Naive thymus-derived CD4-positive, alpha-beta T cell (primary cell): ENCODE measurements at regions of chr11 and their contacts with region 1.

Region 1: GRCh38 chr11:72483412-72484186 is 49.3 kb upstream of the CLPB start:
- DNase-seq: peak in 1 of 9 donors; percentile 12
- ATAC-seq: peak; percentile 64
- H3K4me3 ChIP-seq: no peak overlapping the region
- H3K4me3 Mint-ChIP-seq: peak overlapping the region in 2 of 10 donors; percentile 23 to 59
- H3K27ac ChIP-seq: no peak overlapping the region
- H3K27ac Mint-ChIP-seq: peak overlapping the region in 3 of 9 donors; percentile 21 to 71 (median 26)
- H3K4me1 ChIP-seq: peaks cover 0 to 4% of the 10 kb centered on the region in 2 donors
- H3K4me1 Mint-ChIP-seq: peaks cover 0 to 14% (median 7%) of the 10 kb centered on the region in 7 donors
- H3K27me3 ChIP-seq: no peaks in the 10 kb centered on the region
- H3K27me3 Mint-ChIP-seq: peaks cover 0 to 12% (median 9%) of the 10 kb centered on the region in 5 donors

Region 2: GRCh38 chr11:72418834-72419562 is 64.6 kb before region 1 on chr11:
- CTCF ChIA-PET with region 1: no interaction called
- POLR2A ChIA-PET with region 1: no interaction called
- intact Hi-C with region 1: no loop called
- DNase-seq: no peak
- ATAC-seq: no peak
- H3K4me3 ChIP-seq: no peak overlapping the region
- H3K4me3 Mint-ChIP-seq: peak overlapping the region in 2 of 10 donors; percentile 10 to 26
- H3K27ac ChIP-seq: no peak overlapping the region
- H3K27ac Mint-ChIP-seq: peak overlapping the region; percentile 37 to 78 (median 62)
- H3K4me1 ChIP-seq: peaks cover 0 to 12% of the 10 kb centered on the region in 2 donors
- H3K4me1 Mint-ChIP-seq: peaks cover 20 to 49% (median 43%) of the 10 kb centered on the region in 7 donors
- H3K27me3 ChIP-seq: no peaks in the 10 kb centered on the region
- H3K27me3 Mint-ChIP-seq: no peaks in the 10 kb centered on the region

Region 3: GRCh38 chr11:72519220-72519881 is 35.8 kb after region 1 on chr11:
- CTCF ChIA-PET with region 1: interaction called, 3 read pairs
- POLR2A ChIA-PET with region 1: no interaction called
- intact Hi-C with region 1: loop called in 1 of 2 experiments (anchors 1 kb)
- DNase-seq: peak in 6 of 9 donors; percentile 10 to 35 (median 24)
- ATAC-seq: peak; percentile 50
- H3K4me3 ChIP-seq: peak overlapping the region; percentile 33
- H3K4me3 Mint-ChIP-seq: peak overlapping the region; percentile 69 to 90 (median 86)
- H3K27ac ChIP-seq: peak overlapping the region; percentile 61
- H3K27ac Mint-ChIP-seq: peak overlapping the region; percentile 85 to 96 (median 90)
- H3K4me1 ChIP-seq: peaks cover 11 to 30% of the 10 kb centered on the region in 2 donors
- H3K4me1 Mint-ChIP-seq: peaks cover 13 to 34% (median 24%) of the 10 kb centered on the region in 7 donors
- H3K27me3 ChIP-seq: no peaks in the 10 kb centered on the region
- H3K27me3 Mint-ChIP-seq: peaks cover 0 to 36% (median 0%) of the 10 kb centered on the region in 5 donors

Region 4: DNA sequence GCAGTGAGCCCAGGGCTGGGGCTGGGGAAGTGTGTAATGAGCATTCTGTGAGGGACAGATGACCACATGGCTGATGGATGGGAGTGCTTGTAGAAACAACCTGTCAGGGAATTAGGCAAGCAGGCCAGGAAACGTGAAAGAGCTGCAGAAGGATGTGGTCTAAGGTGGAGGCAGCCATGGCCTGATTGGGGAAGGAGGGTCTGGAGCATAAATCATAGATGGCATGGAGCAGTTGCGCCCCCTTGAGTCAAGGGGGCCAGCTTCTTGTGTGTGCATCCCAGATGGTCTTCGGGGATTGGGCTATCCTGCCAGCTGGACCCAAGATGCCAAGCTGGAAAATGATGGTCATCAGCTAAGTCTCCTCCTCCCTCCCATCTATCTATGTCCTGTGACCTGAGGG is 70.1 kb after region 1 on chr11:
- CTCF ChIA-PET with region 1: interaction called, 4 read pairs
- POLR2A ChIA-PET with region 1: no interaction called
- intact Hi-C with region 1: loop called in 1 of 2 experiments (anchors 1 kb)
- DNase-seq: peak in 3 of 9 donors; percentile 1 to 8 (median 6)
- ATAC-seq: no peak
- H3K4me3 ChIP-seq: no peak overlapping the region
- H3K4me3 Mint-ChIP-seq: peak overlapping the region in 1 of 10 donors; percentile 23
- H3K27ac ChIP-seq: no peak overlapping the region
- H3K27ac Mint-ChIP-seq: no peak overlapping the region
- H3K4me1 ChIP-seq: no peaks in the 10 kb centered on the region
- H3K4me1 Mint-ChIP-seq: peaks cover 0 to 9% (median 5%) of the 10 kb centered on the region in 7 donors
- H3K27me3 ChIP-seq: no peaks in the 10 kb centered on the region
- H3K27me3 Mint-ChIP-seq: peaks cover 3 to 34% (median 10%) of the 10 kb centered on the region in 5 donors

Region 5: DNA sequence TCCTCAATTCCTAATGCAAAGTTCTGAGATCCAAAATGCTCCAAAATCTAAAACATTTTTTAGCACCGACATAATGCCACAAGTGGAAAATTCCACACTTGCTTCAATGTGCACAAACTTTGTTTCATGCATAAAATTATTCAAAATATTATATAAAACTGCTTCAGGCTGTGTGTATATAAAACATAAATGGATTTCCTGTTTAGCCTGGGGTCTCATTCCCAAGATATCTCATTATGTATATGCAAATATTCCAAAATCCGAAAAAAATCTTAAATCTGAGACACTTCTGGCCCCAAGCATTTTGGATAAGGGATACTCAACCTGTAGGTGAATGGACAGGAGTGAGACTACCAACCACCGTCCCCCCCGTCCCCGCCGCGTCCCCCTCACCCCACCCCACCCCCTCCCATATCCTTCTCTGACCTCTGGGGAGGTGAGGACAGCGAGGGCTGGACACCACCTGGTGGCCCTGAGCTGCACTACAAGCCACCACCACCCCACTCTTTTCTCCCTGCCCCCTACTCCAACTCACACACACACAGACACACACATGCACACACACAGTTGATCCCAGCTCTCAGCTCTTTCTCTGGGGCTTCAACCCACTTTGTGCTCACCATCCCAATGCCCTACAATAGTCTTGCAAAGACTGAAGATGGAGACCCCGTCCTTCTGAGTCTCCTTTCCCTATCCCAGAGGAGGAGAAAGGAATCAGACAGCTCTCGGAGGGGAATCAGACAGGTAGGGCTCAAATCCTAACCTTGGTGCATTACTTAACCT is 89.7 kb after region 1 on chr11:
- CTCF ChIA-PET with region 1: interaction called, 3 read pairs
- POLR2A ChIA-PET with region 1: interaction called, 4 read pairs
- intact Hi-C with region 1: loop called (anchors 1 kb)
- DNase-seq: peak in 3 of 9 donors; percentile 7 to 29 (median 16)
- ATAC-seq: peak; percentile 73
- H3K4me3 ChIP-seq: no peak overlapping the region
- H3K4me3 Mint-ChIP-seq: peak overlapping the region in 1 of 10 donors; percentile 8
- H3K27ac ChIP-seq: no peak overlapping the region
- H3K27ac Mint-ChIP-seq: peak overlapping the region in 1 of 9 donors; percentile 11
- H3K4me1 ChIP-seq: no peaks in the 10 kb centered on the region
- H3K4me1 Mint-ChIP-seq: peaks cover 0 to 18% (median 0%) of the 10 kb centered on the region in 7 donors
- H3K27me3 ChIP-seq: no peaks in the 10 kb centered on the region
- H3K27me3 Mint-ChIP-seq: peaks cover 5 to 19% (median 13%) of the 10 kb centered on the region in 5 donors

Region 6: DNA sequence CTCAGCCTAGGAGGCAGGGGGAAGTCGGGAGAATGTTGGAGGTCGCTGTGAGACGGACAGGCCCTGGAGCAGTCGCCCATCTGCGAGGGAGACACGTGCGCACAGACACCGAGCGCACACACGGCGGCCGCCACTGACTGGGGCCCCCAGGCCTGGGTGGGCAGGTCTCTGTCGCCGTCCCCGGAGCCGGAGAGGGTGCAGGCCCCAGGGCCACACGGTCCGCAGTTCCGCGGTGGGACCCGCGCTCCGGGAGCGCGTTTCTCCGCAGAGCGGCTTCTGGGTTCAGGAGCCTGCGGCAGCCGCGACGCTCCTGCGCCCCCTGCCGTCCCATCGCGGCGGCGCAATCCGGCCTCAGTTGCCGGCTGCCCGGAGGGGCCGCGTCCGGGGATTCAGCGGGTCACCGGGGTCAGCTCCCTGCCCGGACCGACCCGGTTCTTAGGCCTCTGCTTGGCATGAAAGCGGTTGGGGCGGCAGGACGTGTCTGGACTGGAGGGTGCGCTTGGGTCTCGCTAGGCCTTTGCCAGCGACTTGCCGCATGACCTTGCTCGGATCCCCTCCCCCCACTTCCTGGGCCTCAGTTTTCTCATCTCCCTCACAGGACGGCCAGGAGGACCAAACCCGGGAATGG is 159.4 kb after region 1 on chr11:
- CTCF ChIA-PET with region 1: interaction called, 3 read pairs
- POLR2A ChIA-PET with region 1: no interaction called
- intact Hi-C with region 1: loop called in 1 of 2 experiments (anchors 1 kb)
- DNase-seq: peak; percentile 25 to 81 (median 70)
- ATAC-seq: peak; percentile 82
- H3K4me3 ChIP-seq: peak overlapping the region; percentile 55
- H3K4me3 Mint-ChIP-seq: peak overlapping the region in 8 of 10 donors; percentile 27 to 72 (median 64)
- H3K27ac ChIP-seq: no peak overlapping the region
- H3K27ac Mint-ChIP-seq: peak overlapping the region in 1 of 9 donors; percentile 7
- H3K4me1 ChIP-seq: no peaks in the 10 kb centered on the region
- H3K4me1 Mint-ChIP-seq: peaks cover 0 to 6% (median 0%) of the 10 kb centered on the region in 7 donors
- H3K27me3 ChIP-seq: no peaks in the 10 kb centered on the region
- H3K27me3 Mint-ChIP-seq: peaks cover 0 to 15% (median 0%) of the 10 kb centered on the region in 5 donors